HEK293 (cell line): ENCODE measurements at regions of chr19 and their contacts with region 1.

Region 1: DNA sequence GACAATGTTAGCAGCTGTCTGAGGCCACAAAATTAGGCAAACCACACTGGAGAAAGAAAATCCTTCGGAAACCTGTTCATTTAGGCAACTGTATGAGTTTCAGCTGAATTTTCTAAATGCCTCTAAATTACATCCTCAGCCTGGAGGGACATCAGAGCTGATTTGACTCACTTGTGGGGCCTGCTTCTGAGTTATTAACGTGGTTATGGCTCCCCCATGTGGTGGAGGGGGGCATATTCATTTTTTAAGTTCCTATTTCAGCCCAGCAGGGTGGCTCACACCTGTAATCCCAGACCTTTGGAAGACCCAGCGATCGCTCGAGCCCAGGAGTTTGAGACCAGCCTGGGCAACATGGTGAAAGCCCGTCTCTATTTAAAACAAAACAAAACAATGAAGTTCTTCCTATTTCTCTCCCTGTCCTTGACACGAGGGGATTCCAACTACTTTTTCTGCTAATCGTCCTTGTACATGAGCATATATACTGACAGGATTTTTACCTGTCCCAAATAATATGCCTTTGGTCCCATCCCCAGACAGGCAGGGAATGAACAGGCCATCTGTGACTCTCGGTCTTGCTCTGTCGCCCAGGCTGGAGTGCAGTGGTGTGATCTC is 31.5 kb upstream of the HIF3A start:
- H3K4me3 ChIP-seq: no peak overlapping the region
- H3K27ac ChIP-seq: no peak overlapping the region
- H3K4me1 ChIP-seq: peaks cover 4% of the 10 kb centered on the region; the same call in 1 of the 2 replicates
- CTCF ChIP-seq: peak; percentile 88

Region 2: DNA sequence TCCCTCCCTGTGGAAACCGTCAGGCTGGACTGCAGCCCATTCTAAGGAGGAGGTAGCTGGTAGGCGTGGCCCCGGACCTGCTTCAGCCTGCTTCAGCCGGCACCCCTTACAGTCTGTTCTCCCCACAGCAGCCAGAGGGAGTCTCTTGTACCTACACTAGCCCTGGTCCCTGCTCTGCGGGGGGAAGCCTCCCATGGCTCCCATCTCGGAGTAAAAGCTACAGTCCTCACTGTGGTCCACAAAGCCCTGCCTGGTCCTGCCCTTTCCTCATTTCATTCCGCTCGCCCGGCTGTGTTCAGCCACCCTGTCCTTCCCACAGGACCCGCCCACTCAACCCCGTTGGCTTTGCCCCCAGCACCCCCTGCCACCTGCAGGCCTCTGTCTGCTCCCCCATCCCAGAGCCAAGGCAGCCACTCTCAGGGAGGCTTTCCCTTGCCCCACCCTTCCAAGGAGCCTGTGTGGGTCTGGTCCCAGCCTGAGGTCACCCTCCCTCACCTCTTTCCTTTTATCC is 243.7 kb before region 1 on chr19:
- CTCF ChIA-PET with region 1: interaction called, 10 read pairs
- POLR2A ChIA-PET with region 1: no interaction called
- H3K4me3 ChIP-seq: no peak overlapping the region
- H3K27ac ChIP-seq: no peak overlapping the region
- H3K4me1 ChIP-seq: no peaks in the 10 kb centered on the region; the same call in 1 of the 2 replicates
- CTCF ChIP-seq: no peak

Region 3: DNA sequence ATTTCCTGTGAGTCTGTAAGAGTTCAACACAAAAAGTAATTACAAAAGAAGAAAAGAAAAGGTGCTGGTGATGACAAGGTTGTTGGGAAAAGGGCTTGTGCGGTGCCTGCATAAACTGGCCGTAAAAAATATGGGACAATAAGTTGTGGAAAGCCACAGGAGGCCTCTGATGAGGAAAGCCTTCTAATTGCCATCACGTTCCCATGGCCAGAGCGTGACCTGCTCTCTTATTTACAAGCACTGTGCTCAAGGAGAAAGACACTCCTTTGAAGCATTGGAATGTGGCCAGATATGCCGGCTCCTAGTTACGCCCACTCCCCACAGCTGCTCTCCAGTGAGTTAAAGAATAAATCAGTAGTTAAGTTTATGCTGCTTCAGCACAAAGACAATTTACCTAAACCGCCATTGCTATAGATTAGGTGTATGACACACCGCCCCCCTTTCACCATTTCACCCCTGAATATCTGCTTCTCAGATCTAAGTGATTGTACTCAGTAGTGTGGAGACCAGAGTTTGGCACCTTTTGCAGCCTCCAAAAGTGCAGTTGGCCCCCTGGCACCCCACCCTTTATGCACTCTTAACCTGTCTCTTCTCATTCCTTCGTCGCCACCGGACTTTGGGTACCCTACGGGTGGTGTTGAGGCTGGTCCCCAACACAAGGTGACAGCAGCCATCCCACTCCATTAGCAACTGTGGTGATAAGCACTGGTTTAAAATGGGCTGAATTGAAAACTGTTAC is 234.3 kb before region 1 on chr19:
- CTCF ChIA-PET with region 1: interaction called, 70 read pairs
- POLR2A ChIA-PET with region 1: no interaction called
- H3K4me3 ChIP-seq: no peak overlapping the region
- H3K27ac ChIP-seq: no peak overlapping the region
- H3K4me1 ChIP-seq: peaks cover 8% of the 10 kb centered on the region; the same call in 1 of the 2 replicates
- CTCF ChIP-seq: no peak

Region 4: GRCh38 chr19:46090444-46090843 is 174.9 kb before region 1 on chr19:
- CTCF ChIA-PET with region 1: interaction called, 20 read pairs
- POLR2A ChIA-PET with region 1: no interaction called
- H3K4me3 ChIP-seq: no peak overlapping the region
- H3K27ac ChIP-seq: no peak overlapping the region
- H3K4me1 ChIP-seq: 0 out of 2 replicates have a peak, but pooled peaks cover 2% of the 10 kb centered on the region
- CTCF ChIP-seq: no peak

Region 5: DNA sequence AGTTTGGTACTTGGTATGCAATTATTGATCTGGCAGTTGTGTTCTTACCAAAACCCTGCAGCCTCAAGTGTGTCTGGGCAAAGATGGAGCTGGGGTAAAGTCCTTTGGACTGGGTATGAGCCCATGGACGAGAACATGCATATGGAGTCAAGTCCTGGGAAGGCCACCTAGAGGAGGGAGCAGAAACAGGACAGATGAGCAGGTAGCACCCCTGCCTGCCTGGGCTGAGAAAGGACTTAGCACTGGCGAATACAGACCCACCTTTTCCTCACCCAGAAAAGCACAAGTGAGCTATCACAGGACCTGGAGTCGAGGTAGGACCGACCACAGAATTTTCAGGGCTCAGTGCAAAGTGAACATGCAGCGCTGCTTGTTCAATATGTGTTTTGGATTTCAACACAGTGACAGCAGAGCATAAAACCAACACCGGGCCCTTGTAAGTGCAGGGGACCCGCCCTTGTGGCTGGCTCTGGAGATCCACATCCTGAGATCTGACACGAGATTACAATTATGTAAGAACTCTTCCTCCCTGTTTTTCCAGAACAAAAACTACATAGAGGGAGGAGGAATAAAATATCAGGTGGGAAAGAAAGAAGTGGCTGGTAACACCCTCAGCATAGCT is 91.3 kb before region 1 on chr19:
- CTCF ChIA-PET with region 1: no interaction called
- POLR2A ChIA-PET with region 1: no interaction called
- H3K4me3 ChIP-seq: no peak overlapping the region
- H3K27ac ChIP-seq: no peak overlapping the region
- H3K4me1 ChIP-seq: no peaks in the 10 kb centered on the region
- CTCF ChIP-seq: no peak

Region 6: DNA sequence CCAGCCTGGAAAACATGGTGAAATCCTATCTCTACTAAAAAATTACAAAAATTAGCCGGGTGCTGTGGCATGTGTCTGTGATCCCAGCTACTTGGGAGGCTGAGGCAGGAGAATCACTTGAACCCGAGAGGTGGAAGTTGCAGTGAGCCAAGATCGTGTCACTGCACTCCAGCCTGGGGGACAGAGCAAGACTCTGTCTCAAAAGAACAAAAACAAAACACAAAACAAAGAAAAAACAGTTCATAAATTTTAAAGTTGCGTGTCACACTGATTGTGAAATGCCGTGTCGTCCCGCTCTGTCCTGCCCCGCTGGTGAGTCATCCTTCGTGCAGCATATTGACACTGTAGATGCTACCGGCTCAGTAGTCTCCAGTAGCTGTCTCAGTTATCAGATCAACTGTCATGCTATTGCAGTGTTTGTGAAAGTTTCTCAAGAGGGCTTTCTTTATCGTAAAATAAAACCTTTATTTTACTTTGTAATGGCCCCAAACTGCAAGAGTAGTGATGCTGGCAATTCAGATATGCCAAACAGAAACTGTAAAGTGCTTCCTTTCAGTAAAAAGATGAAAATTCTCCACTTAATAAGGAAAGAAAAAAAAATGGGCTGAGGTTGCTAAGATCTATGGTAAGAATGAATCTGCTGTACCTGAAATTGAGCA is 72.2 kb before region 1 on chr19:
- CTCF ChIA-PET with region 1: interaction called, 43 read pairs
- POLR2A ChIA-PET with region 1: no interaction called
- H3K4me3 ChIP-seq: no peak overlapping the region
- H3K27ac ChIP-seq: no peak overlapping the region; the same call in 1 of the 2 replicates
- H3K4me1 ChIP-seq: peaks cover 10% of the 10 kb centered on the region
- CTCF ChIP-seq: no peak

Region 7: DNA sequence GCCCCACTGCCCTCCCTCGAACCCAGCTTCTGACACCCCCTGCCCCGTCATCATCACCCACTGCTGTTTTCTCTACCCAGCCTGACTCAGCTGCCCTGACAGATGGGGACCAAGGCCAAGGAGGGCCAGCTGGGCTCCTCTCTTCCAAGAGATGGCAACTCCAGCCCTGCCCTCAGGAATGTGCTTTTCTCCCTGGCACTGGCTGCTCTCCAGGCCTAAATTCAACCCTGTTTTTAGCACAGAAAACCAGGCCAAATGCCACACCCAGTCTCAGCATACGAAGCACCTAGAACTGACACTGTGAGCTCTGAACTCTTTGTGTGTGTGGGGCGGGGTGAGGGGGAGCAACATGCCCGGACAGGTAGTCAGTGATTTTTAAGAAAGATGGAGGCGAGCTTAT is 59.2 kb before region 1 on chr19:
- CTCF ChIA-PET with region 1: interaction called, 11 read pairs
- POLR2A ChIA-PET with region 1: no interaction called
- H3K4me3 ChIP-seq: no peak overlapping the region
- H3K27ac ChIP-seq: no peak overlapping the region
- H3K4me1 ChIP-seq: no peaks in the 10 kb centered on the region
- CTCF ChIP-seq: no peak

Region 8: DNA sequence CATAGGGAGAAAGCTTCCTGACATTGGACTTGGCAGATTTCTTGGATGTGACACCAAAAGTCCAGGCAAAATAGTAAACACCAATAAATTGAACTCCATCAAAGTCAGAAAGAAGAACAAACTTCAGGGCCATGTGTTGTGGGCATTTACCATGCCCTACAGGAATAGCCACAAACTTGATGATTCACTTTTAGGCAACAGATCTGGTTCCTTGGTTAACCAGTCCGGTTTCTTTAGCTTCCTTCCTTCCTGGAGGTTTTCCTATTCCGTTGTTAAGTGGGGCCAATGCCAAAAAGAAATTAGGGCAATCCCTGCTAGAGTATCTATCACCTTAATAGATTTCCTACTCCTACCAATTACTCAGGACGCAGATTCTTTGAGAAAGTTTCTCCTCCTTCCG is 10.5 kb before region 1 on chr19:
- CTCF ChIA-PET with region 1: interaction called, 37 read pairs
- POLR2A ChIA-PET with region 1: no interaction called
- H3K4me3 ChIP-seq: no peak overlapping the region
- H3K27ac ChIP-seq: no peak overlapping the region
- H3K4me1 ChIP-seq: peaks cover 3% of the 10 kb centered on the region; the same call in 1 of the 2 replicates
- CTCF ChIP-seq: no peak